Breast epithelium (tissue), 4 donors: ENCODE measurements at regions of chr6 and their contacts with region 1.

Region 1: DNA sequence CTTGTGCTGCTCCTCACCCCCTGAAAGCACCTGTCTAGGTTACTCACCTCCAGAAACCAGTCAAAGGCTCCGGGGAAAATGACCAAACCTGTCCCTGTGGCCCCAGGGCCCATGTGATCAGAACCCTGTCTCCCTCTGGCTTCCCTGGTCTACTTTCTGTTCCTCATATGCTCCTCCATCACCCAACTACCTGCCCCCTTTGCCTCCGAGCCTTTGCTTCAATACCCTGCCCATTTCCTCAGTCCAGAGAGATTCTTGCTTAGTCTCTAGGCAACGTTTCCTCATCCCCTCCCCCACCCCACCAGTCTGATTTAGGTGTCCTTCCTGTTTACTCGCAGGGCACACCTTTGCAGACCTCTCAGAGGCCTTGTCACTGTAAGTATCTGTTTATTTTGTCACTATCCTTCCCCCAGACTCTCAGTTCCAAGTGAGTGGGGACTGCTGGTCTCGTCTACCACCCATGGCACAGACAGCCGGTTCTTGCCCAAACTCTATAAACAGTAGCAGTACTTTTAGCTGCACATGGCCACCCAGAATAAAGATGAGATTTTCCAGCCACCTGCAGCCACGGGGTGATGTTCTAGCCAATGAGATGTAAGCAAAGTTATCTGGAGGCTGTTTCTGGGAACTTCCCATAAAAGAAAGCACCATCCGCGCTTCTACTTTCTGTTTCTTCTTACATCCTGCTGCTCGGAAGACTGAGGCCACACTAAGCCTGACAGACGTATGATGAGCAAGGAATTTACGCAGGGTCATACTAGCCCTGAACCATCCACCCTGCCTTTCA is 13.3 kb downstream of the ELOVL5 start:
- DNase-seq: no peak
- H3K4me3 ChIP-seq: peak overlapping the region in 1 of 3 donors; percentile 13
- H3K27ac ChIP-seq: peak overlapping the region; percentile 29 to 44
- H3K4me1 ChIP-seq: no peaks in the 10 kb centered on the region
- H3K27me3 ChIP-seq: no peaks in the 10 kb centered on the region
- CTCF ChIP-seq: no peak
- POLR2A ChIP-seq: no peak

Region 2: GRCh38 chr6:53309059-53309900 is 26.1 kb before region 1 on chr6:
- intact Hi-C with region 1: loop called (anchors 1 kb)
- DNase-seq: no peak
- H3K4me3 ChIP-seq: no peak overlapping the region
- H3K27ac ChIP-seq: peak overlapping the region in 1 of 2 donors; percentile 23
- H3K4me1 ChIP-seq: no peaks in the 10 kb centered on the region
- H3K27me3 ChIP-seq: no peaks in the 10 kb centered on the region
- CTCF ChIP-seq: no peak
- POLR2A ChIP-seq: no peak